ENCODE measurements at regions of chr3 and their contacts with region 1.

Region 1: DNA sequence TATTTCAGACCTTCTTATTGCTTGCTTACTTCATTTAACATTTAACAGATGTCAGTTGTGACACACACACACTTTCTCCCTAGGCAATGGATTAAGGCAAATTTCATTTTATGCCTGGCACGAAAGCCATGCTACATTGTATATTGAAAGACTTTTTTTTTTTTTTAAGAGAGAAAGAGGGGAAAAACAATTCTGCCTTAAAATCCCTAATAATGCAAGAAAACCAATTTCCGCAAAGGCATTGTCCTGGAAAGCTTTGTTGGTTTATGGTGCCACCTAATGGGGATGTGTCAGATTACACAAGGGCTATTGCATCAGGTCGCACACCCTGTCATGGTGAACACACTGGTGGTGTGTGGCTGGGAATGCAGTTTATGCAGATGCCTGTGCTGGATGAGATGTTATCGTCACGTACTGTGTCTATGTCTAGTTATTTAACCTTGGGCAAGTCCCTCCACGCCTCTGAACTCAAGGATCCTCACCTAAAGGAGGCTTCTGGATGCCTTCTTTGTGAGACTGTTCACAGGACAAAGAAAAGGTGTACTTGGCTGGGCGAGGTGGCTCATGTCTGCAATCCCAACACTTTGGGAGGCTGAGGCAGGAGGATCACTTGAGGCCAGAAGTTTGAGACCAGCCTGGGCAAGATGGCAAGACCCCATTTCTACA is 37.3 kb upstream of the RFTN1 start:
- DNase-seq: peak; percentile 64
- H3K4me3 Mint-ChIP-seq: no peak overlapping the region
- H3K27ac Mint-ChIP-seq: peak overlapping the region; percentile 24
- H3K4me1 Mint-ChIP-seq: peaks cover 11% of the 10 kb centered on the region
- H3K27me3 Mint-ChIP-seq: peaks cover 6% of the 10 kb centered on the region

Region 2: DNA sequence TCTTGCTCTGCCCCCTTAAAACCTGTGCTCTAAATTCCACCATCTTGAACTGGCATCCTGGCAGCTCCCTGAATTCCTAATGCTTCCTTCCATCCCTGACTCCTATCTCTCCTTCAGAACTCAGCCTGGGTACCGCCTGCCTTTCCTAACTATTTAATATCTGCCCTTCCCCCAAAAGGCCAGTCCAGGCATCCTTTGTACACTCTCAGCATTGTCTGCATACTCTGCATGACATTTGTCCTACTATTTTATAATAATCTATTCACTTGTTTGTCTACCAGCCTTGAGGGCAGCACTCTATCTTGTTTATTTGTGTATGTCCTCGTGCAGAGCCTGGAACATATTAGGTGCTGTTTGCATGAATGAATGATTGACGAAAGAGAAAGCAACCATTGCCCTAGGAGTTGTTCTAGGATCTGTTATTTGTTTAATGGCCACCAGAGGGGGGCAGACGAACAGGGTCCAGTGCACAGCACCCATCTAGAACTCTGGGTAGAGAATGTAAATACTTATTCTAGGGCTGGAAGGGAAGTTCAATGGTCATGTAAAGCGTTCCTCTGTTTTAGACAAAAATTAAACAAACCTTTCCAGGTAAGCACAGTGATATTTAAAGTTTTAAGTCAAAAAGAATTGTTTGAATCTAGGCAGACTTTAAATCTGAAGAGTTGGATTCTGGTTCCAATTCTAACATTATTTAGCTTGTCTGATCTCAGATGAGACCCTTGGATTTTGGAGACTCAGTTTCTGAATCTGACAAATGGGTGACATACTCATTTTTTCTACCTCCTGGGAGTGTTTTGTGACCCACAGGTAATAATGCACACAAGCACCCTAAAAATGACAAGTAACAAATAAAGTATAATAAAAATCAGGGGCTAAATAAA is 502.1 kb before region 1 on chr3:
- intact Hi-C with region 1: loop called (anchors 5 kb)
- DNase-seq: peak; percentile 16
- H3K4me3 Mint-ChIP-seq: no peak overlapping the region
- H3K27ac Mint-ChIP-seq: no peak overlapping the region
- H3K4me1 Mint-ChIP-seq: peaks cover 8% of the 10 kb centered on the region
- H3K27me3 Mint-ChIP-seq: peaks cover 2% of the 10 kb centered on the region

Region 3: GRCh38 chr3:16264708-16265454 is 285.9 kb before region 1 on chr3 and contains the starts of genes DPH3 and OXNAD1:
- intact Hi-C with region 1: loop called (anchors 1 kb)
- DNase-seq: peak; percentile 99
- H3K4me3 Mint-ChIP-seq: peak within 1 kb of the TSS; percentile 96
- H3K27ac Mint-ChIP-seq: peak within 1 kb of the TSS; percentile 95
- H3K4me1 Mint-ChIP-seq: peaks cover 20% of the 10 kb centered on the region
- H3K27me3 Mint-ChIP-seq: no peaks in the 10 kb centered on the region
- total RNA-seq, gene DPH3: 22.7 and 23.1 TPM in 2 replicates
- total RNA-seq, gene OXNAD1: 18.7 and 20.5 TPM in 2 replicates

Region 4: GRCh38 chr3:16319307-16319706 is 231.5 kb before region 1 on chr3:
- intact Hi-C with region 1: loop called (anchors 1 kb)
- DNase-seq: peak; percentile 72
- H3K4me3 Mint-ChIP-seq: no peak overlapping the region
- H3K27ac Mint-ChIP-seq: peak overlapping the region; percentile 67
- H3K4me1 Mint-ChIP-seq: peaks cover 49% of the 10 kb centered on the region
- H3K27me3 Mint-ChIP-seq: no peaks in the 10 kb centered on the region

Region 5: GRCh38 chr3:16482770-16483531 is 67.9 kb before region 1 on chr3:
- intact Hi-C with region 1: no loop called
- DNase-seq: peak; percentile 38
- H3K4me3 Mint-ChIP-seq: peak overlapping the region; percentile 37
- H3K27ac Mint-ChIP-seq: peak overlapping the region; percentile 59
- H3K4me1 Mint-ChIP-seq: peaks cover 61% of the 10 kb centered on the region
- H3K27me3 Mint-ChIP-seq: no peaks in the 10 kb centered on the region

Region 6: GRCh38 chr3:16496408-16497222 is 54.2 kb before region 1 on chr3:
- intact Hi-C with region 1: no loop called
- DNase-seq: no peak
- H3K4me3 Mint-ChIP-seq: no peak overlapping the region
- H3K27ac Mint-ChIP-seq: peak overlapping the region; percentile 27
- H3K4me1 Mint-ChIP-seq: peaks cover 53% of the 10 kb centered on the region
- H3K27me3 Mint-ChIP-seq: no peaks in the 10 kb centered on the region

Region 7: GRCh38 chr3:16589867-16590624 is 39.2 kb after region 1 on chr3:
- intact Hi-C with region 1: no loop called
- DNase-seq: no peak
- H3K4me3 Mint-ChIP-seq: no peak overlapping the region
- H3K27ac Mint-ChIP-seq: no peak overlapping the region
- H3K4me1 Mint-ChIP-seq: peaks cover 14% of the 10 kb centered on the region
- H3K27me3 Mint-ChIP-seq: peaks cover 43% of the 10 kb centered on the region

Region 8: DNA sequence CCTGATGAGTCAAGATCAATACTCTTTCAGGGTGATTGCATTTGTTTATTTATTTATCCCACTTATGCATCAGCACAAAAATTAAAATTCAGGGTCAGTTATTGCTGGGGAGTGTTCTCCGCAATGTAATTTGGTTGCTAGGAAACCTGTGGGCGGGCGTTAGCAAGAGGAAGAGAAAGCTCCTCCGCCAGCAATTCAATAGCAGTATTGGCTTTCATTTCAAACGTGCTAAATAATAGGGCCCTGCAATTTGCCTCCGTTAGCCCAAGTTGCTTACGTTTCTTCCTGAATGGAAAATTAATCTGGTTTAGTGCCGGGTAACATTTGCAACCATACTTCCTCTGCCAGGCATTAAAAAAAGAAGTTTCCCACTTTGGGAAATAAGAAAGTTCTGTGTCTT is 298.4 kb after region 1 on chr3:
- intact Hi-C with region 1: no loop called
- DNase-seq: peak; percentile 66
- H3K4me3 Mint-ChIP-seq: peak overlapping the region; percentile 7
- H3K27ac Mint-ChIP-seq: peak overlapping the region; percentile 2
- H3K4me1 Mint-ChIP-seq: peaks cover 33% of the 10 kb centered on the region
- H3K27me3 Mint-ChIP-seq: peaks cover 6% of the 10 kb centered on the region

Measured in activated T-helper 2 cell treated with anti-CD3 and anti-CD28 coated beads, Interferon-gamma antibody, Interleukin-2, Interleukin-4, amounts not matched to agents 10 μg/mL and 5 μg/mL and 100 μg/mL, durations not matched to agents 14 hours and 24 hours and 36 hours (primary cell).